ENCODE measurements at regions of chr12 and their contacts with region 1.

Region 1: DNA sequence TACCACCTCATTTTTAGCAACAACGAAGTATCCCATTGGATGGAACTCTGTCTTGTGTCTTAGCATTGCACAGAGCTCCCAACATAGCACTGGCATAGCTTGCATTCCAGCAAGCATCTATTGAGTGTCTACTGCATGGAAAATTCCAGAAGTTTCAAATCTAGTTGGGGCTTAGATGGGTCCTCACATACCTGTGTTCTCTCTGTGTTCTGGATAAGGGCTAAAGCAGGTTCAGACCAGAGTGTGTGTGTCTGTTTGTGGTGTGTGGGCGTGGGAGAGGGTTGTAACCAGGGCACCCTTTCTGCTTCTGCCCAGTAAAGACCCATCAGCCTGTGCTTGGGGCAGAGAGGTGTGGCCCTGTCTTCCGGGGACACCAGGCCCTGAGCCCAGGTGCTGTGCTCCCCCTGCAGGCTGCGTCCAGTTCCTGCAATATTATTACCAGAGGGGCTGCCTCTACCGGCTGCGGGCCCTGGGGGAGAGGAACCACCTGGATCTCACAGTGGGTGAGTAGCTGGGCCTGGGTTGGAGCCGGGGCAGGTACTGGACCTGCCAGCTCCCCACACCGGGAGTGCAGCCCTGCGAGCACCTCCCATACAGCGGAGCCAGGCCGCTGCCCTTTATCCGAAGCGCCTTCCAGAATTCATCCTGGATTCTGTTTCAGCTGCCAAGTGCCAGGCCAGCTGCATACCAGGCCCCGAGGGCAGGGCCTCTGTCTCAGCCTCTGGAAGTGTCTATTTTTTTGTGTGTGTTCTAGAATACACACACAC is 20.3 kb downstream of the RHOF start:
- DNase-seq: peak; percentile 85
- ATAC-seq: peak; percentile 74

Region 2: GRCh38 chr12:121811434-121812319 is 38.5 kb after region 1 on chr12:
- intact Hi-C with region 1: loop called (anchors 2 kb)
- DNase-seq: peak; percentile 89
- ATAC-seq: peak; percentile 89